Esophagus muscularis mucosa (tissue), 4 donors: ENCODE measurements at regions of chr5 and their contacts with region 1.

Region 1: GRCh38 chr5:140926443-140927227 is 536 bp downstream of the PCDHAC1 start:
- DNase-seq: no peak
- H3K4me3 ChIP-seq: peak overlapping the region; percentile 62 to 64 (median 63)
- H3K27ac ChIP-seq: peak overlapping the region; percentile 72 to 77 (median 74)
- H3K4me1 ChIP-seq: peaks cover 9 to 30% (median 23%) of the 10 kb centered on the region in 4 donors
- H3K27me3 ChIP-seq: peaks cover 0 to 29% (median 3%) of the 10 kb centered on the region in 4 donors
- CTCF ChIP-seq: peak; percentile 73 to 96 (median 85)
- EP300 ChIP-seq: no peak
- POLR2A ChIP-seq: no peak

Region 2: DNA sequence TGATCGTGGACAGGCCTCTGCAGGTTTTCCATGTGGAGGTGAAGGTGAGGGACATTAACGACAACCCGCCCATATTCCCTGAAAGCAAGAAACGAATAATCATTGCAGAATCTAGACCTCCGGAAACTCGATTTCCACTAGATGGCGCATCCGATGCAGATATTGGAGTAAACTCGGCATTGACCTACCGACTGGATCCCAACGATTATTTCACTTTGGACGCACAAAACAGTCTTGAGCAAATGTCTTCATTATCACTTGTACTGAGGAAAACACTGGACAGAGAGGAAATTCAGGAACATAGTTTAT is 44.1 kb before region 1 on chr5:
- intact Hi-C with region 1: loop called (anchors 5 kb)
- DNase-seq: no peak
- H3K4me3 ChIP-seq: peak overlapping the region; percentile 41 to 56 (median 49)
- H3K27ac ChIP-seq: peak overlapping the region in 2 of 4 donors; percentile 9 to 24
- H3K4me1 ChIP-seq: peaks cover 0 to 14% (median 8%) of the 10 kb centered on the region in 4 donors
- H3K27me3 ChIP-seq: peaks cover 0 to 46% (median 0%) of the 10 kb centered on the region in 4 donors
- CTCF ChIP-seq: peak; percentile 24 to 51 (median 41)
- EP300 ChIP-seq: no peak
- POLR2A ChIP-seq: no peak

Region 3: DNA sequence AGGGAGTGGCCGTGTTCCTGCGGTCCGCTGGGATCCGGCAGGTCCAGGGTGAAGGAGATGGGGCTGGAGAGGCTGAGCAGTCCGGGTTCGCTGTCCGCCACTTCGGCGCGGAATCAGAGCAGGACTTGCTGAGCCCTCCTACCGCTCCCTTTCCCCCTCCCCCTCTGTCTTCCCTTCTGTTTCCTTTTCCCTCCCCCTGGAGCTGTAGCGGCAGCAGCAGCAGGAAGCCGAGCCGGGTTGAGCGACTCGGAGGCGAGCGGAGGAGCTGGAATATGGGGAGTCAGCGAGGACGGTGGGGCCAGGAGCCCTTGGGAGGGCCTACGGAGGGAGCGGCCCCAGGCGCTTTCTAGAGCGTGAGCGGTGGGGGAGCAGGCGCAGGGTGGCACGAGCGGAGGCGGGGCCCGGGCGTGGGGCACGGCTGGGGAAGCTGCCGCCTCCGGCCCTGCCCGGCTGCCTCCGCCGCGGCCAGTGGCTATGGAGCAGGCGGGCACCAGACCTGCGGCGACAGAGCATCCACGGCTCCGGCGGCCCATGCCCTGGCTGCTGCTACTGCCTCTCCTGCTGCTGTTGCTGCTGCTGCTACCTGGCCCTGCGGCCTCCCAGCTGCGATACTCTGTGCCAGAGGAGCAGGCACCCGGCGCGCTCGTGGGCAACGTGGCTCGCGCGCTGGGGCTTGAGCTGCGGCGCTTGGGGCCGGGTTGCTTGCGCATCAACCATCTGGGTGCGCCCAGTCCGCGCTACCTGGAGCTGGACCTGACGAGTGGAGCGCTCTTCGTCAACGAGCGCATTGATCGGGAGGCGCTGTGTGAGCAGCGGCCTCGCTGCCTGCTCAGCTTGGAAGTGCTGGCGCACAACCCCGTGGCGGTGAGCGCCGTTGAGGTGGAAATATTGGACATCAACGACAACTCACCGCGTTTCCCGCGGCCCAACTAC is 39.9 kb after region 1 on chr5 and contains the start of gene PCDHAC2:
- intact Hi-C with region 1: loop called (anchors 5 kb)
- DNase-seq: no peak
- H3K4me3 ChIP-seq: peak within 1 kb of the TSS; percentile 65 to 80 (median 74)
- H3K27ac ChIP-seq: peak within 1 kb of the TSS; percentile 83 to 87 (median 84)
- H3K4me1 ChIP-seq: peaks cover 11 to 73% (median 51%) of the 10 kb centered on the region in 4 donors
- H3K27me3 ChIP-seq: peaks cover 0 to 17% (median 0%) of the 10 kb centered on the region in 4 donors
- CTCF ChIP-seq: no peak
- EP300 ChIP-seq: no peak
- POLR2A ChIP-seq: no peak
- total RNA-seq, gene PCDHAC2: 8.8 to 26.6 (median 18.0) TPM